K562 (cell line): ENCODE measurements at regions of chr3 and their contacts with region 1.

Region 1: DNA sequence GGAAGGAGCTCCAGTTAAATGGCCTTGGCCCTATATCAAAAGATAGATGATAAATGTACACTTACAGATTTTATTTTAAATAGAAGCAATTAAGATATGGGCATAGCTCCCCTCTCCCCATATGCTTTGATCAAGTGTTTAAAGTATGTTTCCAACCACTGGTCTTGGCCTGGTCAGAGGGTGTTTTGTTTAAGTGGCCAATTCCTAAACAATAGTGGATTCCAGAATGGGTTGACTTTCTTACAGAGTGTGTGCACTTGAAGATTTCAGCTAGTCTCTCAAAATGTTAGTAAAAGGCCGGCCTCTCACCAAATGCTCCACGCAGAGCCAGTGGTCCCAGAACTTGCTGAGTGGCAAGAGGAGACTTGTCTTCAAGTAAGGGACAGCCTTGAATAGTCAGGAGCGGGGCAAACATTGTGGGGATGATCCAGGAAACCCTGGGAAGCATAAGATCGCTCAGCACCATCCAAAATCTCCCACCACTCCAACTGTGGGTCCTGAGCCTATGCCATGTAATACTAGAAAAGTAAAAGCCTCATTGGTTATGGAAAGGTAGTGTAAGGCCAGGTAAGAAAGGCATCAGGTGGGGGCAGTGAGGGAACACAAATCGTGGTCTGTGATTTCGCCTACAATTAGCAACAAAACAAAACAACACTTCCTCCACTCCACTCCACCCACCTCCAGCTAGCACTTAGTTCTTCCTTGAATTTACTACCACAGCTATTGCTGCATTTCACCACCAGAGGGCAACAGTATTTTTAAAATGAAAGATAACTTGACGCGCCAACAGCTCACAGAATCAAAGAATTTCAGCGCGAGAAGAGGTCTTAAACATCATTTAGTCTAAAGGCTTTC is 4.8 kb downstream of the RARRES1 start:
- DNase-seq: peak; percentile 65 to 81 (median 73)
- ATAC-seq: peak; percentile 87
- H3K4me3 ChIP-seq: no peak overlapping the region
- H3K27ac ChIP-seq: peak overlapping the region; percentile 3; the same call in 1 of the 3 replicates
- H3K4me1 ChIP-seq: peaks cover 3 to 10% of the 10 kb centered on the region in 2 experiments; a peak in 3 of 5 replicates
- H3K27me3 ChIP-seq: no peaks in the 10 kb centered on the region
- CTCF ChIP-seq: peak; percentile 77 to 89 (median 83)
- EP300 ChIP-seq: no peak
- POLR2A ChIP-seq: no peak
- RAD21 ChIP-seq: peak; percentile 92 to 95

Region 2: DNA sequence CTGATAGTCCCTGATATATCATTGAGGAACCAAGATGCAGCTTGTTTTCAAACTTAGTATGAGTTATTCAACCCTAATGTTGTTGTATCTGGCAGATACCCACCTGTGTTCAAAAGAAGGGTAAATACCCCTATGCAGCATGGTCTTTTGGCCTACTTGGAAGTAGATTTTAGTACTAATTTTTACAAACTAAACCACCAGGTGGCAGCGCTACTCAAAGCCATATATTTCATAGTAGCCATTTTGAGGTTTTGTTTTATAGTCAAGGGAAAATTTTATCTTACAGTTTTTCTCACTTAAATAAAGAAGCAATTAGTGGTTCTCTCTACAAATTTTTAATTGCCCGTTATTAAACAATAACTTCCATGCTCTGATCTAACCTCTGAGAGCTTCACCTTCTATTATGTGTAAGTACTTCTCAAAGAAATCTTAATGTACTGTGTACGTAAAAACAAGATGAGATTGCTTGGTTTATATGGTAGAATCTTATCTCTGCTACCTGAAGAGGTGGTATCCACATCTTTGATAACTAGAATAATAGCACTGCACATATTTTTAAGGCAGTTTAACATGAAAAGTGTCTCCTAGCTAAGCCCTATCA is 187.9 kb before region 1 on chr3:
- CTCF ChIA-PET with region 1: no interaction called
- POLR2A ChIA-PET with region 1: no interaction called
- in situ Hi-C with region 1: no loop called
- intact Hi-C with region 1: loop called (anchors 10 kb)
- DNase-seq: peak; percentile 18 to 61 (median 26)
- ATAC-seq: peak; percentile 79
- H3K4me3 ChIP-seq: no peak overlapping the region
- H3K27ac ChIP-seq: no peak overlapping the region
- H3K4me1 ChIP-seq: no peaks in the 10 kb centered on the region
- H3K27me3 ChIP-seq: no peaks in the 10 kb centered on the region
- CTCF ChIP-seq: peak; percentile 35 to 63 (median 48); a peak in 4 of 6 replicates
- EP300 ChIP-seq: no peak
- POLR2A ChIP-seq: no peak
- RAD21 ChIP-seq: peak; percentile 47 to 67; a peak in 3 of 4 replicates

Region 3: GRCh38 chr3:158570999-158571974 is 156.1 kb before region 1 on chr3 and contains the start of gene MLF1:
- CTCF ChIA-PET with region 1: no interaction called
- POLR2A ChIA-PET with region 1: no interaction called
- in situ Hi-C with region 1: no loop called
- intact Hi-C with region 1: loop called (anchors 10 kb)
- DNase-seq: peak; percentile 97 to 99 (median 98)
- ATAC-seq: peak; percentile 100
- H3K4me3 ChIP-seq: peak within 1 kb of the TSS; percentile 63
- H3K27ac ChIP-seq: peak within 1 kb of the TSS; percentile 83
- H3K4me1 ChIP-seq: peaks cover 8 to 25% of the 10 kb centered on the region in 2 experiments; a peak in 4 of 5 replicates
- H3K27me3 ChIP-seq: no peaks in the 10 kb centered on the region
- CTCF ChIP-seq: no peak
- EP300 ChIP-seq: no peak
- POLR2A ChIP-seq: peak; percentile 76
- RAD21 ChIP-seq: no peak
- polyA plus RNA-seq, gene MLF1: 63.5 to 71.0 TPM

Region 4: DNA sequence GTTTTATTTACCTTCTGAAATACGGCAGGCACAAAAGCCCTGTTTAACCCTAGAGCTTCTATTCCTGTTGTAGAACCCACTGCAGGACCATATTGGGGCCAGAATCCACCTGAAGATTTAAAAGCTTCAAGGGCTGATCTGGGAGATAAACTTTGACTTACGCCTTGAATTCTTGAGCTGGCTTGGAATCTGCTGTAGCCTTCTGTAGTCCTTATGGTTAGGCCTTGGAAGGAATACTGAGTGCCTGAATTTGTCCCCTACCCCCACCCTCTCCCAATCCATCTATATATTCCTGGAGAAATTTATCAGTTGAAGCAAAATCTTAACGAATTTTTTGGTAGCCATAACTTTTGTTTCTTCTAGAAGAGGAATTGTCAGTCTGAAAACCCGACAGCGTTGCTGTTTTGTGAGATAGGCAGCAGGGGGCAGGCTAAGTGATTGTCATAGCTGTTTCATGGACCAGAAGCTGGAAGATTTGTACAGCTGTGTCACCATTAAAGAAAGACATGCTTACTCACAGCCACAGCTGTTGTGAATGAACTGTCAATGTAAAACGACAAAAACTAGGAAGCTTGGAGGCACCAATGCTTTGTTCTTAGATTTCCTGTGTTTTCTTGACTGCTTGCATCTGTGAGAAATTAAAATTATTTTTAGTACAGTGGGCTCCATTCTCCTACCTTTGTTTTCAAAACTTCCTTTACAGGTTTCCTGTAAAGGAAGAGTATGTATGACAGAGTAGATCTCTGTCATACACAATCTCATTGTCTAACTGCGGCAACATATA is 67.8 kb before region 1 on chr3:
- CTCF ChIA-PET with region 1: interaction called, 6 read pairs
- POLR2A ChIA-PET with region 1: no interaction called
- in situ Hi-C with region 1: no loop called
- intact Hi-C with region 1: loop called (anchors 1 kb)
- DNase-seq: peak; percentile 58 to 70 (median 60)
- ATAC-seq: peak; percentile 91
- H3K4me3 ChIP-seq: no peak overlapping the region
- H3K27ac ChIP-seq: no peak overlapping the region
- H3K4me1 ChIP-seq: no peaks in the 10 kb centered on the region
- H3K27me3 ChIP-seq: no peaks in the 10 kb centered on the region
- CTCF ChIP-seq: peak; percentile 61 to 85 (median 70)
- EP300 ChIP-seq: no peak
- POLR2A ChIP-seq: no peak
- RAD21 ChIP-seq: peak; percentile 74 to 77

Region 5: DNA sequence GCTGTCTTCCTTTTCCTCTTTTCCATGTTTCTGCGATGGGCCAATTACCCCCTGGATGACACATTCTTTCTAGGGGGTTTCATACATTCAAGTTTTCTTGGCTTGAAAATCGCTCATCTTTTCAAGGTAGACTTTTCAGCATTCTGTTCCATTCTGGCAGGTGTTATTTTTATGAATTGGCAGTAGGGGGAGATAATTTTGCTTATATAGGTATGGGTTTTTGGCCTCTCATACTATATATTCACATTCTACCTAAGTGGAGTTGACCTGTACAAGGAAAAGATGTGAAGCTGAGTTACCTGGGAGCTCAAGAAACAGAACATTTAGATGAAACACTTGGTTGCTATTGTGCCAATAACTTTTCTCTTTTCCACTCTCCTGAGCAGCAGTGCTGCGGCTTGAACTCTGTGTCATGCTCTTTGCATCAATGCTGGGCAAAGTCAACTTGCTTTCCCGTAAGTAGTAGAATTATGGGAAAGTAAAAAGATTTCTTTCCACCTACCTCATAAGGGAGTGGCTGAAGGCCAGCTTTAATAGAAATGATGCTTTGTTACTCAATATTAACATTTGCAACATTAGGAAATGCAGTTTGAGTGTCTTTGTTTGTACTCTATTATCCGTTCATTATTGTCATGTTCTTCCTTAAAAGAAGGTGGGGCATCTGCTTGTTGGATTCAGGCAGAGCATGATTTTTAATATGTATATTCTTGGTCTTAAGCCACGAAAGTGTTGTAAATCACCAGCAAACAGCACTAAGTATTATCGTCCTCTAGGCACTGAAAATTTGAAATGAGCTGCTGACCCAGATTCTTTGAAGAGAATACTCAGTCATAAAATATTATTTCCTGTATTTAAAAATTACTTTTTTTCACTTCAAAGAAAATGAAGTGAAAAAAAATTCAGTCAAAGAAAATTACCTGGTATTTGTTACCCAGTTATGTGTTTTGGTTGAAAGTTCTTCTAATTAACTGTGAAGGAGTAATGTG is 46.7 kb after region 1 on chr3:
- CTCF ChIA-PET with region 1: no interaction called
- POLR2A ChIA-PET with region 1: no interaction called
- in situ Hi-C with region 1: no loop called
- intact Hi-C with region 1: loop called (anchors 1 kb)
- DNase-seq: no peak
- ATAC-seq: no peak
- H3K4me3 ChIP-seq: no peak overlapping the region
- H3K27ac ChIP-seq: no peak overlapping the region
- H3K4me1 ChIP-seq: peaks cover 15 to 49% of the 10 kb centered on the region in 2 experiments; a peak in 4 of 5 replicates
- H3K27me3 ChIP-seq: no peaks in the 10 kb centered on the region
- CTCF ChIP-seq: peak in 2 of 3 experiments; percentile 9 to 18; a peak in 1 of 6 replicates
- EP300 ChIP-seq: no peak
- POLR2A ChIP-seq: no peak
- RAD21 ChIP-seq: no peak